K562 (cell line): ENCODE measurements at regions of chr15 and their contacts with region 1.

Region 1: DNA sequence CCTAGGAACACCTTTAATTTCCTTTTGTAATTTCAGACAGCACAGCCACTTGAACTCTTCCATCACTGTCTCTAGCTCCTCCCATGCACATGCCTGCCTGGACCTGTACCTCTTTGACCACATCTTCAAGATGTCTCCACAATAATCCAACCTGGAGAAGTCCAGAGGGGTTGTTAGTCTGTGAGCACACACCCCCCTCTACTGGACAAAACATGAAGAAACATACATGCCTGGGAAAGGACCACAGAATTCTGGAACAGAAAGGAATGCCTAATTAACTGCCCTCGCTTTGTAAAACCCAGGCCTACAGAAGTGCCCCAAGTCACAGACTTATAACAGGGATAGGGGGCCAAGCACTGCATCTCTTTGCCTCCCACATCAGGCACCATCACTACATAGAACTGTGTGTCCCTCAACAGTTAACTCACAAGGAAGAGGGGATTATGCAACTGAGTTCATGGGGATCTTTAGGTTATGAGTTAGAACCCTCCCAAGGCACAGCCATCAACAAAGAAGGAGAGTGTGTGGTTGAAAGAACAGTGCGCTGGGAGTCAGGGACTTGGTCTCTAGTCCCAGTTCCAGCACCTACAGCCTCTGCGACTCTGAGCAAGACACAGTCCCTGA is 61.7 kb downstream of the FMN1 start:
- DNase-seq: peak; percentile 30 to 35 (median 32)
- ATAC-seq: peak; percentile 80
- H3K4me3 ChIP-seq: no peak overlapping the region
- H3K27ac ChIP-seq: no peak overlapping the region
- H3K4me1 ChIP-seq: no peaks in the 10 kb centered on the region
- H3K27me3 ChIP-seq: no peaks in the 10 kb centered on the region
- CTCF ChIP-seq: peak; percentile 43 to 71 (median 59); a peak in 4 of 6 replicates
- EP300 ChIP-seq: no peak
- POLR2A ChIP-seq: no peak
- RAD21 ChIP-seq: peak; percentile 45 to 66

Region 2: GRCh38 chr15:33086507-33087121 is 46.2 kb before region 1 on chr15:
- CTCF ChIA-PET with region 1: interaction called, 4 read pairs
- POLR2A ChIA-PET with region 1: no interaction called
- in situ Hi-C with region 1: no loop called
- intact Hi-C with region 1: loop called (anchors 5 kb)
- DNase-seq: peak in 2 of 4 experiments; percentile 11 to 43
- ATAC-seq: peak; percentile 75
- H3K4me3 ChIP-seq: no peak overlapping the region
- H3K27ac ChIP-seq: no peak overlapping the region
- H3K4me1 ChIP-seq: no peaks in the 10 kb centered on the region
- H3K27me3 ChIP-seq: peaks cover 0 to 2% of the 10 kb centered on the region in 2 experiments; a peak in 1 of 5 replicates
- CTCF ChIP-seq: peak; percentile 9 to 62 (median 36); a peak in 4 of 6 replicates
- EP300 ChIP-seq: no peak
- POLR2A ChIP-seq: no peak
- RAD21 ChIP-seq: peak in 1 of 2 experiments; percentile 59; a peak in 3 of 4 replicates

Region 3: DNA sequence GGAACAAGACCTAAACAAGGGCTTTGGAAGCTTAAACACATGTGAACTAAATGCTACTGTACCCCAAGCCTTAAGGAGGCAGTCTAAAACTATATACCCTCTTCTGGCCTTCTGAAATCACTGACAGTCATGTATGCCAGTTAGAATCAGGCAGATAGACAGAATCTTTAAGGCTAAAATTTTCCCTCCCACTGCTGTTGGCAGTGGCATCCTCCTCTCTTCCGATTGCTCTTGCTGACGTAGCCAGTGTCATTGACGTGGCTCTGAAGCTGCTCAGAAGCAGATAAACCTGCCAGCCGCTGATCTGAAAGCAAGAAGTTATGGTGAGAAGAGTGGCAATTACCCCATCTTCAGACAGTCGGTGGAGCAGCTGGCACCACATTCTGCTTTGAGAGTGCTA is 181.2 kb after region 1 on chr15:
- CTCF ChIA-PET with region 1: no interaction called
- POLR2A ChIA-PET with region 1: no interaction called
- in situ Hi-C with region 1: no loop called
- intact Hi-C with region 1: no loop called
- DNase-seq: no peak
- ATAC-seq: no peak
- H3K4me3 ChIP-seq: no peak overlapping the region
- H3K27ac ChIP-seq: no peak overlapping the region
- H3K4me1 ChIP-seq: 0 out of 5 replicates have a peak, but pooled peaks cover 0 to 4% of the 10 kb centered on the region in 2 experiments
- H3K27me3 ChIP-seq: peaks cover 6 to 21% of the 10 kb centered on the region in 2 experiments; a peak in 4 of 5 replicates
- CTCF ChIP-seq: no peak
- EP300 ChIP-seq: no peak
- POLR2A ChIP-seq: no peak
- RAD21 ChIP-seq: no peak